Activated CD4-positive, alpha-beta T cell treated with anti-CD3 and anti-CD28 coated beads for 36 hours (primary cell): ENCODE measurements at regions of chr10 and their contacts with region 1.

Region 1: DNA sequence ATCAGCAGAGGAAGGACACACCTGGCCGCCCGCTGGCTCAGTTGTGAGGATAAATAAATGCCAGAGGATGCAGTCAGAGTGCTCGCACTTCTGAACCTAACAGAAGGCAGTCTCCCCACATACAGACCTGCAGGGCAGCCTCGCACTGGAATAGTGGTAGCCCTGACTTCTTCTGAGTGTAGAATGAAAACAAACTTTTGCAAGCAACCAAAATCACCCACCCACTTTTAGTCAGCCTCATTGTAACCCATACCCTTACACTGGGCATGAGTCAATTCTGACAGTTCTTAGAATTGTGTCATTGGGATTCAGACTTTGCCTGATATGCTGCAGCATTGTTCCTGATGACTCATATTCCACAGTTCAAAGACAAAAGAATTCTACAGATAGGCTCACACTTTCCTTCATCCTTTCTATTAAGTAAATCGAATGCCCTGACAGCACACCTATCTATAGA is 167.0 kb upstream of the CDK1 start:
- DNase-seq: peak; percentile 55
- ATAC-seq: peak; percentile 93
- H3K4me3 Mint-ChIP-seq: peak overlapping the region; percentile 26
- H3K27ac Mint-ChIP-seq: peak overlapping the region; percentile 66
- H3K4me1 Mint-ChIP-seq: peaks cover 35% of the 10 kb centered on the region
- H3K27me3 Mint-ChIP-seq: no peaks in the 10 kb centered on the region

Region 2: GRCh38 chr10:60172363-60172990 is 438.8 kb before region 1 on chr10:
- CTCF ChIA-PET with region 1: no interaction called
- POLR2A ChIA-PET with region 1: no interaction called
- intact Hi-C with region 1: no loop called
- DNase-seq: no peak
- ATAC-seq: no peak
- H3K4me3 Mint-ChIP-seq: no peak overlapping the region
- H3K27ac Mint-ChIP-seq: no peak overlapping the region
- H3K4me1 Mint-ChIP-seq: no peaks in the 10 kb centered on the region
- H3K27me3 Mint-ChIP-seq: no peaks in the 10 kb centered on the region

Region 3: DNA sequence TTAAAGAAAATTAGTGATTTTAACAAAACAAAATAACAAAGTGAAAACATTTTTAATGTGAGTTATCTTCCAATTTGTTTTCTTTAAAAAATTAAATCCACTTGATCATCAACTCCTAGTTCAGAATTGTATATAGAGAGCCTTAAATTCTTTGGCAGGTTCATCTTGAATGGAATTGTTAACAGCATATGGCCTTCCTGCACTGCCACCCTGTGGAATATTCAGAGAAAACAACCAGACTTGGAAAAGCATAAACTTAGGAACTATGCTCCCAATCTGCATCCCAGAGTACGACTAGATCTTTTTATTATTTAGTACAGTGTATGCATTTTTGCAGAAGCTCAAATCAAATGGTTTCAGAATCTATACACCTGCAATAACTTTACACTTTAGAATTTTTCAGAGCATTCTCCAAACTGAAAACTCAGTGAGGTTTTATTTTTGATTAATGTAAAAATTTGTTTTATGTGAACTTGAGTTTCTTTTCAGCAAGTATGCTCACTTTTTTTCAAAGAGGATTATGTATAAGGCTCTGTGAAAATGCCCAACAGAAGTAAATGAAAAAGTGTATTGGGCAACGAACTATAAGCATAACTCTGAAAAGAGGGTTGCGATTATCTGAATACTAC is 176.8 kb before region 1 on chr10:
- CTCF ChIA-PET with region 1: no interaction called
- POLR2A ChIA-PET with region 1: no interaction called
- intact Hi-C with region 1: no loop called
- DNase-seq: peak; percentile 17
- ATAC-seq: no peak
- H3K4me3 Mint-ChIP-seq: no peak overlapping the region
- H3K27ac Mint-ChIP-seq: no peak overlapping the region
- H3K4me1 Mint-ChIP-seq: peaks cover 6% of the 10 kb centered on the region
- H3K27me3 Mint-ChIP-seq: no peaks in the 10 kb centered on the region

Region 4: GRCh38 chr10:60566096-60566495 is 45.2 kb before region 1 on chr10:
- CTCF ChIA-PET with region 1: no interaction called
- POLR2A ChIA-PET with region 1: no interaction called
- intact Hi-C with region 1: loop called in 1 of 2 experiments (anchors 1 kb)
- DNase-seq: no peak
- ATAC-seq: peak; percentile 75
- H3K4me3 Mint-ChIP-seq: no peak overlapping the region
- H3K27ac Mint-ChIP-seq: peak overlapping the region; percentile 56
- H3K4me1 Mint-ChIP-seq: peaks cover 52% of the 10 kb centered on the region
- H3K27me3 Mint-ChIP-seq: no peaks in the 10 kb centered on the region

Region 5: GRCh38 chr10:60594476-60595051 is 16.8 kb before region 1 on chr10:
- CTCF ChIA-PET with region 1: interaction called, 7 read pairs
- POLR2A ChIA-PET with region 1: no interaction called
- intact Hi-C with region 1: loop called in 1 of 2 experiments (anchors 2 kb)
- DNase-seq: peak; percentile 27
- ATAC-seq: peak; percentile 94
- H3K4me3 Mint-ChIP-seq: no peak overlapping the region
- H3K27ac Mint-ChIP-seq: no peak overlapping the region
- H3K4me1 Mint-ChIP-seq: peaks cover 23% of the 10 kb centered on the region
- H3K27me3 Mint-ChIP-seq: no peaks in the 10 kb centered on the region